ENCODE measurements at regions of chr4 and their contacts with region 1.

Region 1: DNA sequence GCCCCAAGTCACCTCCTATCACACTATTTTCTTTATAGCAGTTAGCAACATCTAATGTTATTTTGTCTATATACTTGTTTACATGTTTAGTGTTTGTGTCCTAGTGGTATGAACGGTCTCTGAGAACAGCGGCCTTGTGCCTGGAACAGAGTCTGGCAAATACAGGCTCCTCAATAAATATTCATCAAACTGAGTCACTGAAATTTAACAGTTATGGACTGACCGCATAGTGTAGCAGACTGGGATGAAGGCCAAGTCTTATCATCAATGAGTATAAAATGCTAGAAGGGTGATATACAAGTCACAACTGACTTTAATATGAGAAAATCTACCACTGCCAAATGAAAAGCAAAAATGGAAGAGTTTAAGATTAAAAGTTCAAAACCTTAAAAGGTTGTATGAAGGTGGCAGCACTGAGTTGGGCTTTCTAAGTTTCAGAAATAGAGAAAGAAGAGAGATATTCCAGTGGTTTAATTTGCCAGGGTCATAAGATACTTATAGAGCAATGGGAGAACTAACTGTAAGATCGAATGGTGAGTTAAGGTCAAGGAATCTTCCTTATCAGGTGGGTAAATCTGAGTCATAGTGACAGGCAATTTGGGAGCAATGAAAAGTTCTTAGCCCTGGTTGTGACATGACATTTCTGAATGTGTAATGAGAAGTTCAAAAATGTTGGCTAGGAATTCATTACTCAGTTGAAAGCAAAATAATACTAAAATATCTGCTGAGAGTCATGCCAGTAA is 34.9 kb downstream of the ELOVL6 start:
- DNase-seq: peak; percentile 63
- ATAC-seq: peak; percentile 19; the same call in 1 of the 2 replicates
- H3K4me3 ChIP-seq: no peak overlapping the region
- H3K27ac ChIP-seq: peak overlapping the region; percentile 92
- H3K4me1 ChIP-seq: peaks cover 51% of the 10 kb centered on the region
- H3K27me3 ChIP-seq: no peaks in the 10 kb centered on the region
- CTCF ChIP-seq: 0 out of 2 replicates have a peak, but pooled peaks have one; percentile 23

Region 2: DNA sequence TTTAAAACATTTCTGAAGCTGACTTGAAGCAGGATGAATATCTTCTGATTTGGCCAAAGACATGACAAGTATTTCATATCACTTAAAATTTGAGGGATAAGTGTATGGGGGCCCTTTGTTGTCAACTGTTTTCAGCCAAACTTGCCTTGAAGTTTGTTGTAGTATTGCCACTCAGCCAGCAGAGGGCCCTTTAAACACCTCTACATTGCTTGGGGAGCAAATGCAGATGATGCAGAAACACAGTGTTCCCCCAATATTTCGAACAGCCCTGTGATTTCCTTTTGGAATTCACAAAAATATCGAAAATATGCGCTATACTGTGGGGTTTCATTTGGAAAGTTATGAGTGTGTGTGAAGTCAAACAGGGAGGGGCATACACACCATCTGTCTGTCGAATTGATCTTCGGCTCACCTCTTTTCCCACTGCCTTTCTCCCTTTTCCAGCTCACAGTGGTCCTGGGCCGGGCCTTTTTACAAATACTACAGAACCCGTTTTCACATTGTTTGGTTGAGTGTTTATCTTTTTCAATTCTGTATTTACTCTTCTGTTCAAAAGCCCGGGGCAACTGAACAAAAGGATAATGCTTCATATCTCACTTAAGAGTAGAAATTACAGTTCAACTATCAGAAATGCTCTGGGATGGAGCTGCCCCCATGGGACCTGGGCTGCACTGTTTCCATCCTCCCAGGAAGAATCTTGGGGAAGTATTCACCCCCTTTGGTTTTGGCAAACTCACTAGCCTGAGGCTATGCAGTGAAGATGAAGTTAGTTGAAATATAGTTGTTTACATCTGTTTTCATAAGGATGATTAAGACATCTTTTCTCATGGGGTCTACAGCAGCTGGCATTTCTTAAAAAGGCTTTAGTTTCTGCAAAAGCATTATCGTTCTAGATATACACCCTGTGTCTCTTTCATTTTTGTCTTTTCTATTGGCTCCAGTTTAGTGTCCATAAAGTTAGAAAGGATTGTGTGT is 113.3 kb before region 1 on chr4:
- CTCF ChIA-PET with region 1: no interaction called
- POLR2A ChIA-PET with region 1: no interaction called
- intact Hi-C with region 1: loop called (anchors 2 kb)
- DNase-seq: peak; percentile 55
- ATAC-seq: no peak
- H3K4me3 ChIP-seq: no peak overlapping the region
- H3K27ac ChIP-seq: no peak overlapping the region
- H3K4me1 ChIP-seq: peaks cover 13% of the 10 kb centered on the region
- H3K27me3 ChIP-seq: no peaks in the 10 kb centered on the region
- CTCF ChIP-seq: peak; percentile 80

Measured in PC-3 (cell line).